Activated CD4-positive, alpha-beta T cell treated with anti-CD3 and anti-CD28 coated beads for 36 hours (primary cell): ENCODE measurements at regions of chr3 and their contacts with region 1.

Region 1: GRCh38 chr3:41881233-41881821 is 80.6 kb downstream of the ULK4 start:
- DNase-seq: no peak
- ATAC-seq: no peak
- H3K4me3 Mint-ChIP-seq: no peak overlapping the region
- H3K27ac Mint-ChIP-seq: no peak overlapping the region
- H3K4me1 Mint-ChIP-seq: no peaks in the 10 kb centered on the region
- H3K27me3 Mint-ChIP-seq: no peaks in the 10 kb centered on the region

Region 2: DNA sequence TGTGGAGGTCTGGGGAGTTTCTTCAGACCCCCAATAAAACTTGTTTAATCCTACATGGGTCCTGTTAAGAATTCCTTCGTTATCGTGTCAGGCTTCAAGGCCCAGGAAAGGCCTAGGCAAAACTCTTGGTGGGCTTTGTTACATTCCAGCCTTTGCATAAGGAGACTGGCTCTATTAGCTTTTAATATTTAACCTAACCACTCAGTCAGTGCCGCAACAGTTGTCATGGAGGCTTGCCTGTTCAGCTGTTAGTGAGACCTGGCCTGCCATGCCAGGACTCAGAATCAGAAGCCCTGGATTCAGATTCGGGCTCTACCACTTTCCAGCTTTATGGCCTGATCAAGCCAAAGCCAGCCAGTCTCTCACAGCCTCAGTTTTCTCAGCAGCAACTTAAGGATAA is 1552.3 kb before region 1 on chr3:
- CTCF ChIA-PET with region 1: no interaction called
- POLR2A ChIA-PET with region 1: no interaction called
- intact Hi-C with region 1: loop called (anchors 1 kb)
- DNase-seq: no peak
- ATAC-seq: no peak
- H3K4me3 Mint-ChIP-seq: no peak overlapping the region
- H3K27ac Mint-ChIP-seq: no peak overlapping the region
- H3K4me1 Mint-ChIP-seq: peaks cover 3% of the 10 kb centered on the region
- H3K27me3 Mint-ChIP-seq: no peaks in the 10 kb centered on the region

Region 3: GRCh38 chr3:40580494-40581091 is 1300.7 kb before region 1 on chr3:
- CTCF ChIA-PET with region 1: interaction called, 21 read pairs
- POLR2A ChIA-PET with region 1: no interaction called
- intact Hi-C with region 1: loop called (anchors 1 kb)
- DNase-seq: peak; percentile 79
- ATAC-seq: peak; percentile 88
- H3K4me3 Mint-ChIP-seq: no peak overlapping the region
- H3K27ac Mint-ChIP-seq: no peak overlapping the region
- H3K4me1 Mint-ChIP-seq: peaks cover 2% of the 10 kb centered on the region
- H3K27me3 Mint-ChIP-seq: peaks cover 8% of the 10 kb centered on the region

Region 4: DNA sequence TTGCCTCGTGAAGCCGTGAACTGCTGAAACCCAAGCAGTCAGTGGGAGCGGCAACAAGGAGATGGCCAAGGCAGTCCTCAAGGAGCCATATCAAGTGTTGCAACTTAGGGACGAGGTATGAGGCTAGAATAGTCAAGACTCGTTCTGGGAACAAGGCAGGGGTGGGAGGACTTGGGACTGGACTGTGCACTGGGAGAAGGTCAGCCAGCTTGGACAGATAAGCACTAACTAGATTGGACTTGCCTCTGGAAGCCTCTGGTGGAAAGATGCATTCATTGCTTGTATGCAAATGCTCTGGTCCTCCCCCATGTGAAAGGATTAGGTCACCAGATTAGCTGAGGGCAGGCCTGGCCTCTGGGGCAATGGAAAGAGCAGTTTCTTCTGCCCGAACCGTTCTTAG is 805.4 kb before region 1 on chr3:
- CTCF ChIA-PET with region 1: no interaction called
- POLR2A ChIA-PET with region 1: interaction called, 15 read pairs
- intact Hi-C with region 1: no loop called
- DNase-seq: no peak
- ATAC-seq: no peak
- H3K4me3 Mint-ChIP-seq: no peak overlapping the region
- H3K27ac Mint-ChIP-seq: no peak overlapping the region
- H3K4me1 Mint-ChIP-seq: no peaks in the 10 kb centered on the region
- H3K27me3 Mint-ChIP-seq: no peaks in the 10 kb centered on the region

Region 5: DNA sequence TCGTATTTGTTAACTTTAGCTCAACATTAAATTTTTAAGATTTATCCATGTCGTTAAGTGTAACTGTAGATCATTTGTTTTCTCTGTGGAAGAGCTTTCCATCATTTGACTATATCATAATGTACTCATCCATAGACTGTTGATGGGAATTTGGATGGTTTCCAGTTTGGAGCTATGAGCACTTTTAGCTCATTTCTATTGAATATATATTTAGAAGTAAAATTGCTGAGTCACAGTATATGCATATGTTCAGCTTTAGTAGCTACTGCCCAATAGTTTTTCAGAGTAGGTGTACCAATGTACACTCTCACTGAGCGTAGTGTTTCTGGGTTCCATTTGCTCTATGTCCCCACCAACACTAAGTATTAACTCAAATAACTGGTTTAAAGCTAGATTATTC is 182.4 kb before region 1 on chr3:
- CTCF ChIA-PET with region 1: no interaction called
- POLR2A ChIA-PET with region 1: no interaction called
- intact Hi-C with region 1: loop called (anchors 2 to 5 kb)
- DNase-seq: no peak
- ATAC-seq: no peak
- H3K4me3 Mint-ChIP-seq: no peak overlapping the region
- H3K27ac Mint-ChIP-seq: no peak overlapping the region
- H3K4me1 Mint-ChIP-seq: no peaks in the 10 kb centered on the region
- H3K27me3 Mint-ChIP-seq: no peaks in the 10 kb centered on the region